Colonic mucosa (tissue), 4 donors: ENCODE measurements at regions of chr4 and their contacts with region 1.

Region 1: GRCh38 chr4:77600521-77601451 is 4.8 kb upstream of the CXCL13 start:
- DNase-seq: peak; percentile 31
- H3K4me3 ChIP-seq: no peak overlapping the region
- H3K27ac ChIP-seq: no peak overlapping the region
- H3K4me1 ChIP-seq: no peaks in the 10 kb centered on the region
- H3K27me3 ChIP-seq: no peaks in the 10 kb centered on the region
- CTCF ChIP-seq: peak; percentile 79

Region 2: DNA sequence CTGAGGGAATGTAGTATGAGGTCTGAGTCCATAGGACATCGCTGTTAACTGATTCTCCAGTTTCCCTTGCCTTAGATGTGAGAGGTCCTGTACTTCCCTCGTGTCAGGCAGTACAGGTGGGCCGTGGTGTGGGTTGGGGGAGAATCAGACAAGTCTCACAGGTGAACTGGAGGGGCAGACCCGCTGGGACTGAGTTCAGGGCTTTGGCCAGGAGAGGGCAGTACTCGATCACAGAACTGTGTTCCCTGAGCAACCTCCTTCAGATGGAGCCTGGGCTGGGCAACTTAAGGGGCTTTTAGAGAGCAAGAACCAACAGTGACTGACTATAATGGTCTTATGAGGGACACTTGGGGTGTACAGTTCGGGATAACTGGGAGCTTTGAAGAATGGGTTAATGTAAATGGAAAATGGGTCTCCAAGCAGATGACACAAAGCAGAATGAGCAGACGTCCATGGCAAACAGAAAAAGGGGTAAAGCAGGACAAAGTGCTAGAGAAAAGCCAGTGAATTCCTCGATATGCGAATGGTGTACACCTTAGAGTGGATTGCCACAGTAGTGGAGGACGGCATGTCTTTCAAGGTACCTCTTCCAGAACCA is 360.2 kb before region 1 on chr4:
- intact Hi-C with region 1: loop called (anchors 10 kb)
- DNase-seq: peak; percentile 68
- H3K4me3 ChIP-seq: no peak overlapping the region
- H3K27ac ChIP-seq: no peak overlapping the region
- H3K4me1 ChIP-seq: no peaks in the 10 kb centered on the region
- H3K27me3 ChIP-seq: no peaks in the 10 kb centered on the region
- CTCF ChIP-seq: peak; percentile 73

Region 3: GRCh38 chr4:77385124-77385969 is 215.4 kb before region 1 on chr4:
- intact Hi-C with region 1: loop called (anchors 5 kb)
- DNase-seq: peak; percentile 64
- H3K4me3 ChIP-seq: no peak overlapping the region
- H3K27ac ChIP-seq: no peak overlapping the region
- H3K4me1 ChIP-seq: no peaks in the 10 kb centered on the region
- H3K27me3 ChIP-seq: no peaks in the 10 kb centered on the region
- CTCF ChIP-seq: peak; percentile 80

Region 4: GRCh38 chr4:77465271-77465670 is 135.5 kb before region 1 on chr4:
- intact Hi-C with region 1: loop called (anchors 5 kb)
- DNase-seq: peak; percentile 24
- H3K4me3 ChIP-seq: no peak overlapping the region
- H3K27ac ChIP-seq: no peak overlapping the region
- H3K4me1 ChIP-seq: no peaks in the 10 kb centered on the region
- H3K27me3 ChIP-seq: no peaks in the 10 kb centered on the region
- CTCF ChIP-seq: peak; percentile 33

Region 5: DNA sequence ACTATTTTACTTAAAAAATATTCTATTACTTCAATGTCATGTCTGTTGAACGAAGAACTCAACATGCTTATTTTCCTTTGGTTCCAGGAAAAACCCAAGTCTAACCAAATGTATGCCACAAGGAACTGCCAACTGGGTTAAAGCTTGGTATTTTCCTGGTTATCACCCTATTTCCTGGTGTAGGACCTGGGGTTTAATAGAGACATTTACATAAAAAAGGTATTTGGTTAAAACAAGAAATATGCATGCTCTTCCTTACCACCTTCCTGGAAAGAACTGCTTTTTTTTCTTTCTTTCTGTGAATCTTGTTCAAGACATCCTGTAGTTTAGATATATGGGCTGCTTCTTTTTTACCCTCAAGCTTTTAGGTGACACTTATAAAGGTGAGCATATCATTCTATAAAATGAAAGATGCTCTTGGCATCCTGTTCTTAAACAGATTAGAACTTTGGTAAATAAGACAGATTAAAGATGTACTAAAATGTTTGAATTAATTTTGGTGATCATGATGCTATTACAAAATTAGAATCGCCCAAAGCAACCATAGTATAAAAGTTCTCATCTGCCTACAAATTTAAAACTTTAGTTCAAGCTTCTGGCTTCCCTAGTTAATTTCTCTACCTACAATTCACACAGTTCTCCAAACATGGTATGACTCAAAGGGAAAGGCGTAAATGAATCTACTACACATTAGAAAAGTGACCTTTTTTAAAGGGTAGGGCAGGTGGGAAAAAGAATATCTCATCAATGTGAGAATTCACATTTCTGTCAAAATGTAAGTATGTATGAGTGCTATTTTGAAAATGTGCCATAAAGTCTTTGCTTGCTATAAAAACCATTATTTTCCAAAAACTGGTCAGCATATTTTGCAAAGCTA is 114.9 kb after region 1 on chr4:
- intact Hi-C with region 1: no loop called
- DNase-seq: no peak
- H3K4me3 ChIP-seq: no peak overlapping the region
- H3K27ac ChIP-seq: no peak overlapping the region
- H3K4me1 ChIP-seq: no peaks in the 10 kb centered on the region
- H3K27me3 ChIP-seq: no peaks in the 10 kb centered on the region
- CTCF ChIP-seq: no peak